A549 (cell line): ENCODE measurements at regions of chr17 and their contacts with region 1.

Region 1: DNA sequence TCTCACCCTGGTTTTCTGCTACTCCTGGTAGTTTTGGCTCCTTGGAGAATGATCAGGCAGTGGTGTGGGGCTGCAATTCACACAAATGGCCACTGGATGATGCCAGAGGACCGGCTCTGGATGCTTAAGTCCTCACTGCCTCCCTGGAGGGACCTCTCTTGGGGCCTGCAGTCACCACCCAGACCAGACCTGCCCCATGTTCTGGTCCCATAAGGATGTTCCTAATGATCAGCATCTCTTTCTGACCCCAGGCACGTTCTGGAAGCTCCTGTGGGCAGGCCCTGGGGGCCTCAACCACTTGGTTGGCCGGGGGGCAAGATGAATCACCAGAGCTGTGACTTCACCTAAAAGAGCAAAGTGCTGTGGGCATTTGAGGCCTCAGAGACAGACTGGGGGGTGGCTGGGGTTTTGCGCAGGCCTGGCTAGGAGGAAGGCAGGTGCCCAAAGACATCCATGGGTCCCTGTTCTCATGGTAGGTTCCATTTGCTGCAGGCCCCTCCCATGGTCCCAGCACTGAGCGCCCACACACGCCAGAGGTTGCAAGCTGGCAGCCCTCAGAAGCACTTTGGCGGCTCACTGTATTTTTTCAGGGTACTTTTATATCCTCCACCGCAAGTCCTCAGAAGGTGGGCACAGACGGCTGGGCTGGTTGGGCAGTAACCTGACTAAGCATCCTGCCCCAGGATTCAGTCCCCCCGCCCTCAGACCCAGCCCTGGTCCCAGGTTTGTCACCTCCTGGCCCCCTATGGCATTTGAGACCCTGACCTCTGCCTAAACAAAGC is 53.2 kb downstream of the NT5M start:
- DNase-seq: peak; percentile 91 to 96
- ATAC-seq: peak; percentile 86 to 91
- H3K4me3 ChIP-seq: no peak overlapping the region
- H3K27ac ChIP-seq: peak overlapping the region; percentile 55 to 63
- H3K4me1 ChIP-seq: no peaks in the 10 kb centered on the region
- CTCF ChIP-seq: peak; percentile 100
- EP300 ChIP-seq: no peak
- POLR2A ChIP-seq: no peak
- RAD21 ChIP-seq: peak; percentile 100

Region 2: DNA sequence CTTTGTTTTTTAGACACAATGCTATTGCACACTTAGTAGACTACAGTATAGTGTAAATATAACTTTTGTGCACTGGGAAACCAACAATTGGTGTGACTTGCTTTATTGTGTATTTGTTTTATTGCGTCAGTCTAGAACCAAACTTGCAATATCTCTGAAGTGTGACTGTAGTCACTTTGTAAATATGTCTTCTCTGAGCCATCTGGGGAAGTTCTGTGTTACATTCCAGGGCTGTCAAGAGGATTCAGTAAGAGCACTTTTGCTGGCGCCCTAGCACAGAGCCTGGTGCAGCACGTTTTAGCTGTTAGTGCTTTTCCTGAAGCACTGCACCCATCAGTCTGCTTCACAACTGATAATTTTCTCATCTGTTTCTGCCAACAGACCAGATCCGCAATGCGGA is 20.0 kb after region 1 on chr17:
- CTCF ChIA-PET with region 1: interaction called, 149 read pairs
- POLR2A ChIA-PET with region 1: no interaction called
- DNase-seq: no peak
- ATAC-seq: peak in 1 of 2 experiments; percentile 24; a peak in 1 of 6 replicates
- H3K4me3 ChIP-seq: no peak overlapping the region
- H3K27ac ChIP-seq: no peak overlapping the region
- H3K4me1 ChIP-seq: peaks cover 9% of the 10 kb centered on the region; the same call in 2 of the 3 replicates
- CTCF ChIP-seq: no peak
- EP300 ChIP-seq: no peak
- POLR2A ChIP-seq: no peak
- RAD21 ChIP-seq: no peak

Region 3: GRCh38 chr17:17445925-17446665 is 89.8 kb after region 1 on chr17:
- CTCF ChIA-PET with region 1: interaction called, 48 read pairs
- POLR2A ChIA-PET with region 1: no interaction called
- DNase-seq: peak; percentile 98
- ATAC-seq: peak; percentile 86 to 88
- H3K4me3 ChIP-seq: peak overlapping the region; percentile 14; the same call in 1 of the 3 replicates
- H3K27ac ChIP-seq: peak overlapping the region; percentile 71 to 83
- H3K4me1 ChIP-seq: peaks cover 48% of the 10 kb centered on the region
- CTCF ChIP-seq: no peak
- EP300 ChIP-seq: peak; percentile 90 to 97; a peak in 4 of 5 replicates
- POLR2A ChIP-seq: no peak
- RAD21 ChIP-seq: peak; percentile 5 to 49; a peak in 3 of 5 replicates

Region 4: DNA sequence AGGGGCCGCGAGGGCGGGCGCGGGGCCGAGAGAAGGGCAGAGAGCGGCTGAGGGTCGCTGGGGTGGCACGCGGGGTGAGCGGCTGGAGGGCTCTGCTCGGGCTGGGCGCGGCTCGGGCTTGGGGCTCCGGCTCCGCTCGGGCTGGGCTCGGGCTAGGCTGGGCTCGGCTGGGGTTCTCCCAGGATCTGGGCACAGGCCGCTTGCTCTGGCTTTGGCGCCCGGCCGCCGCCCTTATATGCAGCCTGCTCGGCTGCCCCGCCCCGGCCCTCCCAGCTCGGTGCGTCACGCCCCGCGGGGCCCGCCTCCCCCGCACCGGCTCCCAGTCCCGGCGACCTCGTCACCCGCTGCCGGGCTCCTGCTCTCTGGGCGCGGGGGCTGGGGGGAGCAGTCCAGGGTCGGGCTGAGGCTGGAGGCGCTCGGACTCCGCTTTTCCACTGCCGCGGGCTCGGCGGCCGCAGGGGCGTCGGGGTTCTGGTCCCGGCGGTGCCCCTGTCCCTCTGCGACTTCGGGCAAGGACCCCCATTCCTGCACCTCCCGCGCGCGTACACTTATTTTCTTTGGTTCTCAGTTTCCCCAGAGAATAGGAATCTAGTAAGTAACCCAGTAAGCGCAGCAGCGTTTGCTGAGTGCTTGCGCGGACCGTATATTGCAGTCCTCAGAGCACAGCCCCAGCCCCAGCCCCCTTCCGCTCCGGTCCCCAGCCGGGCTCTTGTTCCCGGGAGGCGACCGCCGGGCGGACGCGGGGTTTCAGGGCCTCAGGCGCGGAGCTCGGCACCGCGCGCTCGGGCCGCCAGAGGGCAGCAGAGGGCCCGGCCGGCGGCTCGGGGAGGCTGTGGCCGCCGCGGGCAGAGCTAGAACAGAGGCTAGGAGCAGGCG is 140.1 kb after region 1 on chr17 and contains the start of gene RASD1:
- CTCF ChIA-PET with region 1: interaction called, 66 read pairs
- POLR2A ChIA-PET with region 1: interaction called, 16 read pairs
- DNase-seq: peak; percentile 85 to 88
- ATAC-seq: peak; percentile 83 to 90
- H3K4me3 ChIP-seq: peak within 1 kb of the TSS; percentile 63
- H3K27ac ChIP-seq: peak within 1 kb of the TSS; percentile 81 to 93
- H3K4me1 ChIP-seq: peaks cover 4% of the 10 kb centered on the region; the same call in 2 of the 3 replicates
- CTCF ChIP-seq: peak; percentile 98
- EP300 ChIP-seq: no peak
- POLR2A ChIP-seq: peak; percentile 76
- RAD21 ChIP-seq: peak; percentile 69 to 94
- polyA plus RNA-seq, gene RASD1: 0.99 and 1.4 TPM in 2 replicates

Region 5: DNA sequence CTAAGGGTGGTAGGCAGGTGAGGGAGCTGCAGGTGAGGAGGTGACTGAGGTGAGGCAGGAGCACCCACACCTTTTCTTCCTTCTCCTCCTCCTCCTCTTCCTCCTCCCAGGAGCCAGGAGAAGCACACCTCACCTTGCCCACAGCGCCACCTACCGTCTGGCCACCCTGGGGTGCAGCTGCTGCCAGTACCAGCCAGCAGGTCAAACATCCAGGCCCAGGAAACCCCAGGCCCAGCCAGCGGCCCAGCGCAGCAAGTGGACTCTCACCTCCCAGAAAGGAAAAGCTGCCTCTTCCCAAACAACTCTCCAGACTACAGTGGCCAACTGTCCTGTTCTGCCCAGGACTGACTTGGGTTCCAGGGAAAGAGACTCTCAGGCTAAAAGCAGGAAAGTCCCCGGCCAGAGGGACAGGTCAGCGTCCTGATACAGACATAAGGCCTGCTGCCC is 212.4 kb after region 1 on chr17:
- CTCF ChIA-PET with region 1: interaction called, 236 read pairs
- POLR2A ChIA-PET with region 1: no interaction called
- DNase-seq: peak; percentile 64 to 95
- ATAC-seq: peak; percentile 58 to 86; a peak in 5 of 6 replicates
- H3K4me3 ChIP-seq: no peak overlapping the region
- H3K27ac ChIP-seq: no peak overlapping the region
- H3K4me1 ChIP-seq: no peaks in the 10 kb centered on the region
- CTCF ChIP-seq: peak; percentile 84
- EP300 ChIP-seq: no peak
- POLR2A ChIP-seq: no peak
- RAD21 ChIP-seq: peak; percentile 80 to 81

Region 6: DNA sequence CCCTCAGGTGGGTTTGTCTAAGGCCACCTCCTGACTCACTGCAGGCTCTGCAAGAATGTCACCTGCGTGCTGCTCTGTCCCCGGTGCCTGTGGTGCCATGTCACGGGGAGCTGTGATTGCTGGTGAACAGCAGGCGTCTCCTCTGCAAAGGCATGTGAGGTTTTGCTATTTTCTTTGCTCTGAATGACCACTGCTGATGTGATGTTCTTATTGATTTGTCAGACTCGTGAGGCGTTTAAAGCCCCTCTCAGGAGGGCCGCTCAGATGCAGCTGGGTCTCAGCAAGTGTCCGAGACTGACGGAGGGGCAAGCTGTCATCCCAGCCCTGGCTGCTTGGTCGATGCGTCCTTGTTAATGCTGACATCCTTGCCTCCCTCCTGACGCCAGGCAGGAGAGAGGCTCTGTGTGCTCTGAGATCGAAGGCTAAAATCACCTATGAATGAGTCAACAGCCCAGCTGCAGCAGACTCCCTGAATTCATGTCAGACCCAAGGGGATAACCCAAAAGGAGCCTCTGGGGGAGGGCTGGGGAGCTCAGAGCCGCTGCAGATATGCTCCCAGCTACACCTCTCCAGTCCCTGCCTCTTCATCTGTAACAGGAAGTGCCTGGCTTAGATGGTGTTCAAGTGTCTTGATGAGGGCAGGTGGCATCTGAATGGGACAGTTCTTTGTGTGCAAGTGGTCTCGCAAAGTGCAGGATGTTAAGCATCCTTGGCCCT is 247.0 kb after region 1 on chr17:
- CTCF ChIA-PET with region 1: interaction called, 11 read pairs
- POLR2A ChIA-PET with region 1: no interaction called
- DNase-seq: no peak
- ATAC-seq: peak in 1 of 2 experiments; percentile 22; a peak in 1 of 6 replicates
- H3K4me3 ChIP-seq: no peak overlapping the region
- H3K27ac ChIP-seq: no peak overlapping the region
- H3K4me1 ChIP-seq: no peaks in the 10 kb centered on the region
- CTCF ChIP-seq: no peak
- EP300 ChIP-seq: no peak
- POLR2A ChIP-seq: no peak
- RAD21 ChIP-seq: no peak

Region 7: DNA sequence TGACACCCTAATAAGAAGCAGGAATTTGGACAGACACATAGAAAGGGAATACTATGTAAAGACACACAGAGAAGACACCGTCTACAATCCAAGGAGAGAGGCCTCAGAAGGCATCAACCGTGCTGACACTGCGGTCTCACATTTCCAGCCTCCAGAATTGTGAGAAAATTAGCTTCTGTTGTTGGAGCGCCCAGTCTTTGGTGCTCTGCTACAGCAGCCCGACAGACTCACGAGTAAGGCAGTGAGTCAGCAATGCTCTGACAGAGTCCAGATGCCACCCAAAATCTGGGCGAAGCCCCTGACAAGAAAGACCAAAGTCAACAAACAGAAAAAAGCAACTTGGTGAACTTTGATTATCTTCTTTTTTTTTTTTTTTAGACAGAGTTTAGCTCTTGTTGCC is 292.4 kb after region 1 on chr17:
- CTCF ChIA-PET with region 1: interaction called, 365 read pairs
- POLR2A ChIA-PET with region 1: no interaction called
- DNase-seq: no peak
- ATAC-seq: peak in 1 of 2 experiments; percentile 18; a peak in 2 of 6 replicates
- H3K4me3 ChIP-seq: no peak overlapping the region
- H3K27ac ChIP-seq: no peak overlapping the region
- H3K4me1 ChIP-seq: peaks cover 16% of the 10 kb centered on the region; the same call in 2 of the 3 replicates
- CTCF ChIP-seq: no peak
- EP300 ChIP-seq: no peak
- POLR2A ChIP-seq: no peak
- RAD21 ChIP-seq: no peak